ENCODE measurements at regions of chr10 and their contacts with region 1.

Region 1: DNA sequence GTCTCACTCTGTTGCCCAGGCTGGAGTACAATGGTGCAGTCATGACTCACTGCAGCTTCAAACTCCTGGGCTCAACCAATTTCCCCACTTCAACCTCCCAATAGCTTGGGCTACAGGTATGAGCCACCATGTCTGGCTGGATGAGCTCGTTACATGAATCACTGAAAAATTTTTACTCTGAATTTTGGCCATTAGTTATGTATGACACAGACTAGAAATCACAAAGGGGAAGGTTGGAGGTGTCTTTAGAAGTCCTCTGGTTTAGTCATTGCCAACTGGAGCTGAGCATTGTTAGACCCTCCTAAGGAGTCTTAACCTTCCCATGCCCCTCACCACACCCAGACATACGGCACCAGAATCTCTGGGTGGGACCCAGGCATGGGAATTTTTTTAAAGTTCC is 34.7 kb downstream of the SVIL start:
- DNase-seq: no peak
- ATAC-seq: no peak

Region 2: DNA sequence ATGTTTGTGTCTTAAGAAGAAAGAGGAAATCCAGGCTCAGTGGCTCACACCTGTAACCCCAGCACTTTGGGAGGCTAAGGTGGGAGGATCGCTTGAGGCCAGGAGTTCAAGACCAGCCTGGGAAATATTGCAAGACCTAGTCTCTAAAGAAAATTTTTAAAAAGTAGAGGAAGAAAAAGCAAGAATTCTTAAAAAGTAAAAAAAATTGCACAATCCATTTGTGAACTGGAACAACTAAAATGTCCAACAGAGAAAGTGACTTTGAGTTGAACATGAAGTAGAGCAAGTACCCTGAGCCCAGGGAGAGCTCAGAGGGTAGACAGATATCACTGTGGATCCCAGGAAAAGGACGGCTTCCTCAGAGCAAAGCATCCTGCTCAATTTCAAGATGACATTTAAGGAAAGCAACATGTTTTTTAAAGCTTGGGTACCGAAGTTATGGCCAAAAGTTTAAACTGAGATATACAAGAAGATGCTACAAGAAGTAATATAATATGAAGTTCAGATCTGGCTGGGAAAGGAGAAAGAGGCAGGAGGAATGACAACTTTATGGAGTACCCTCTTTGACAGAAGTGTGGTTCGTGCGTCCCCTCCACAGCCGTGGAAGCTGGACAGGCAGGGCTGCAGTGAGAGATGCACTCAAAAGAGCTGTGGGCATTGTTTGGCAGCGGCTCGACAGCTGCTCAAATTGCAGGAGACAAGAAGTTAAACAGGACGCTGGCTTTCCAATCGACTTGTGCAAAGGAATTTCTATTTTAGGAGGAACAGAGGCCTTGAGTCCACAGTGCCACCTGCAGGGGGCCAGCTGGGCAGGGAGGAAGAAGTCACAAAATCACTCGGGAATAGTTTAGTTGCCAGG is 258.0 kb after region 1 on chr10:
- intact Hi-C with region 1: loop called (anchors 10 kb)
- DNase-seq: peak; percentile 82
- ATAC-seq: peak; percentile 92